Activated CD8-positive, alpha-beta memory T cell treated with anti-CD3 and anti-CD28 coated beads, Interleukin-2, amount 10 ng/mL, durations not matched to agents 7 days and 5 days (primary cell): ENCODE measurements at regions of chr9 and their contacts with region 1.

Region 1: DNA sequence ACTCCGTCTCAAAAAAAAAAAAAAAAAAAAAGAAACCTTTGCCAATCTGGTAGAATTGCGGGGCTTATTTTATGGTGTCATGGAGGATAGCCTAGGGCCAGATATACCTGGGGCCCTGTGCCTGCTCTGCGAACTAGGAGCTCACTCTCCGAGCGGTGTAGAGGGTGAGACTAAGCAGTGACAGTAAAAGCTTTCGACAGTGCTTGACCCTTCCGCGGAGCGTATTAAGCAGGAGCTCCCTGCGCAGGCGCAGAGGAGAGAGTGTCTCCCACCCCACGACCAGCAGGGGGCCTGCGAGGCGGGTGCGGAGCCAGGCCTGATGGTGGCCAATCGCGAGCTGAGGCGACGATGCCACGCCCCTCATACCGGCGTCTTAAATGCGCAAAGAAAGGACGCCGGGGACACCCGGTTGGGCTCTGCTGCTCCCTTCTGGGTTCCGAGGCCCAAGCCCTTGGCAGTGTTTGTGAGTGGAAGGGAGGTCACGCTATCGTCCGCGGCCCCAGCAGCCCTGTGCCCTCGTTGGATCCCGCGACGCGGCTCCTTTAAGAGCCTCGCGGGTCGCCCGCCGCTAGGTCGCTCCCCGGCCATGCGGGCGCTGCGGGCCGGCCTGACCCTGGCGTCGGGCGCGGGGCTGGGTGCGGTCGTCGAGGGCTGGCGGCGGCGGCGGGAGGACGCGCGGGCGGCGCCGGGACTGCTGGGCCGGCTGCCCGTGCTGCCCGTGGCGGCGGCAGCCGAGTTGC is at the start of gene ENDOG:
- DNase-seq: peak; percentile 99
- ATAC-seq: peak; percentile 95
- H3K4me3 Mint-ChIP-seq: peak within 1 kb of the TSS; percentile 82
- H3K27ac Mint-ChIP-seq: peak within 1 kb of the TSS; percentile 87
- H3K4me1 Mint-ChIP-seq: peaks cover 19% of the 10 kb centered on the region
- H3K27me3 Mint-ChIP-seq: no peaks in the 10 kb centered on the region
- total RNA-seq, gene ENDOG: 19.0 to 22.3 TPM

Region 2: GRCh38 chr9:128643519-128644300 is 174.6 kb before region 1 on chr9:
- CTCF ChIA-PET with region 1: interaction called, 14 read pairs
- DNase-seq: no peak
- ATAC-seq: no peak
- H3K4me3 Mint-ChIP-seq: no peak overlapping the region
- H3K27ac Mint-ChIP-seq: peak overlapping the region; percentile 21
- H3K4me1 Mint-ChIP-seq: peaks cover 5% of the 10 kb centered on the region
- H3K27me3 Mint-ChIP-seq: no peaks in the 10 kb centered on the region

Region 3: DNA sequence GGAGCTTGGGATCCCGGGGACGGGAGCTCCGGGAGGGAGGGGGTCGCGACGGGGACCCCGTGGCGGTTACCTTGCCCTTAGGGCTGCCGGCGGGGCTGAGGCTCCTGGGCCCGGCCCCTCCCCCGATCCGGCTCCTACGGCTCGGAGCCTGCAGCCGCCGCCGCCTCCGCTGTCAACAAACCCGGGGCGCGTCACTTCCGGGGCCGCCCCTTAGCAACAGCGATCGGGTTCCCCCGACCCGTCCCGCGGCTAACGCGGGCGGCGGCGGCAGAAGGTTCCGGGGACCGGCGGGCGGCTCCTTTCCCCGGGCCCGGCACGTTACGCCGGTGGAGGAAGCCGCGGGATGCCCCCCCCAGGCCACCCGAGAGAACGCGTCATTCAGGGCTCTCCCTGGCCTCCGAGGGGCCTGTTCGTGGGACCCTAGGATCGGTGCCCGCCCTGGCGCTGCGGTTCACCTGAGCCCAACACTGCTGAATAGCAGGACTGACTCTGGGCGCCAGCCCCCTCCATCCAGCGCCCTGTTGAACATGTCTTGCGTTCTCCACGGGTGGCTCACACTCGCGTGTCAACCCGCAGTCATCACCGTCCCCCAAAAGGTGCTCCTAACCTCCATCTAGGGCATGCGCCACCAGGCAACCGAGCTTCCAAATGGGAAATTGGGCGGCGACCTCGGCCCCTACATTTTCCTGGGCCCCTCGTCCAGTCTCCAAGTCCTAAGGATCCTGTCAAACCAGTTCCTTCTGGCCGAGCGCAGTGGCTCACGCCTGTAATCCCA is 46.3 kb before region 1 on chr9 and contains the start of gene ZER1:
- CTCF ChIA-PET with region 1: interaction called, 10 read pairs
- DNase-seq: peak; percentile 94
- ATAC-seq: peak; percentile 95
- H3K4me3 Mint-ChIP-seq: peak within 1 kb of the TSS; percentile 95
- H3K27ac Mint-ChIP-seq: peak within 1 kb of the TSS; percentile 96
- H3K4me1 Mint-ChIP-seq: peaks cover 19% of the 10 kb centered on the region
- H3K27me3 Mint-ChIP-seq: no peaks in the 10 kb centered on the region
- total RNA-seq, gene ZER1: 17.7 to 18.2 TPM

Region 4: DNA sequence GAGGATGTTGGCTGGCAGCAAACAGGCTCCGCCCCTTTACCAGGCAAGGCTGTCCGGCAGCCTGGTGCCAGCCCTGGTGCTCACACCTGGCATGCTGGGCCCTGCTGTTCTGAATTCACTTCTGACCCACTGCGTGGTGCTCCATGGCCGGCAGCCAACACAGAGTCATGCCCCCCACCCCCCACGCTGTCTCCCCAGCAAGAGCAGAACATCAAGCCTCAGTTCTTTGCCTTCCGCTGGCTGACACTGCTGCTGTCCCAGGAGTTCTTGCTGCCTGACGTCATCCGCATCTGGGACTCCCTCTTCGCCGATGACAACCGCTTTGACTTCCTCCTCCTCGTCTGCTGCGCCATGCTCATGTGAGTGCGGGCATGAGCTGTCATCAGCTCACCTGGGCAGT is 12.6 kb before region 1 on chr9:
- CTCF ChIA-PET with region 1: interaction called, 14 read pairs
- DNase-seq: no peak
- ATAC-seq: no peak
- H3K4me3 Mint-ChIP-seq: no peak overlapping the region
- H3K27ac Mint-ChIP-seq: no peak overlapping the region
- H3K4me1 Mint-ChIP-seq: no peaks in the 10 kb centered on the region
- H3K27me3 Mint-ChIP-seq: no peaks in the 10 kb centered on the region

Region 5: DNA sequence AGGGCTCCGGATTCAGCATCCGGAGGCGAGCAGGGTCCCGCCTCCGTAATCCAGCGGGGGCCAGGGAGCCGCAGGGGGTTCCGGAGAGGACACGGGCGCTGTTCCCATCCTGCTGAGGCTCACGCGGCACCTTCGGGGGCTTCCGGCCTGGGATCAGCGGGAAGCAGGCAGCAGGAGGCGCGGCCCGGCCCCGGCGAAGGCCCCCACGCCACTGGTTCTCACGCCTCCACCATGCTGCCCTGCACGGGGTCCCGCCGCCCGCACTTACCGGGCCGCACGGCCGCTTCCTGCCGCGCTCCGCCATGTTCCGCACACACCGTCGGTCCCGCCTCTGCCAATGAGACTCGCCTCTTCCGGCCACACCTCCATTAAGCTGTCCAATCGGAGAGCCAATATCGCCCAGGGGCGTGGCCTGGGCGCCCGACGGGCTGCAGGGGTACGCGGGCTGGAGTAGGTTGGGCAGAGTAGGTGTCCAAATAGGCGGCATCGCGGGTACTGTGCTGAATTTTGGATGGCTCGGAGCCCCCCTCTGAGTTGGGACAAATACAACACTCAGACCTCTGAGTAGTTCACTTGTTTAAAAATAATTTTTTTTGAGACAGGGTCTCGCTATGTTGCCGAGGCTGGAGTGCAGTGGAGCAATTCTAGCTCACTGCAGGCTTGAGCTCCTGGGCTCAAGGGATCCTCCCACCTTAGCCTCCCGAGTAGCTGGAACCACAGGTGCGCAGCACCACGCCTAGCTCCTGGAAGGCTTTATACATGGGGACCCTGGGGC is 11.4 kb after region 1 on chr9 and contains the start of gene SPOUT1:
- CTCF ChIA-PET with region 1: interaction called, 31 read pairs
- DNase-seq: peak; percentile 96
- ATAC-seq: peak; percentile 98
- H3K4me3 Mint-ChIP-seq: peak within 1 kb of the TSS; percentile 97
- H3K27ac Mint-ChIP-seq: peak within 1 kb of the TSS; percentile 90
- H3K4me1 Mint-ChIP-seq: peaks cover 23% of the 10 kb centered on the region
- H3K27me3 Mint-ChIP-seq: no peaks in the 10 kb centered on the region
- total RNA-seq, gene SPOUT1: 83.3 to 104 TPM

Region 6: DNA sequence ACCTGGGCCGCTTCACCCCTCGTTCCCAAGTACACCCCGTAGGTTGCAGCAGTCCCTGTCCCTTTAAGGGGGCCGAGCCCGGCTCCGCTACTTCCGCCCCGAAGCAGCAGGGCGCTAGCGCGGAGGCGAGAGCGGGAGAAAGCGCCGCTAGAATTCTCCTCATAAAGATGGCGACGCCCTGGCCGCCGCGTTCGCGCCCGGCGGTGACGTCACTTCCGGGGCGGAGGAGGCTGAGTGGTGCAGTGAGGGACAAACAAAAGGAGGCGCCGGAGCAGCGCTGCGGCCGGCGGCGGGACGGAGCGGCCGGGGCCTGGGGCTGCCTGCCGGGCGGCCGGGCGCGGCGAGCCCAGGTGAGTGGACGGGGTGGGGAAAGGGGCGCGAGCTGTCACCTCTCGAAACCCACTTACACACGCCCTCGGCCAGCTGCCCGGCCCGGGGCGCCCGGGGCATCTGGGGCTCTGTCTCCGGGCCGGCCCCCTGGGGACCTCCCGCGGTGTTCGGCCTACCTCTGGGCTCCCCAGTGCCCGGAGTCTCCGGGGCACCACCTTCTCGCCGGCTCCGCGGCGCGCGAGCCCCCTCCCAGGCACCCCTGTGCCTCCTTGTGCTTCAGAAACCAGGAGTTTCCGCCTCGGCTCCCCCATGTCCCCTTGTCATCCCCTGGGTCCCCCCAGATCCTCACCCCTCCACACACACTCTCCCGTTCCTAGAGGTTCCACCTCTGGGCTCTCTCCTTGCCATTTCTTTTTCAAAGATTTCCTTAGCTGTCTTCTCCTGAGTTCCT is 63.8 kb after region 1 on chr9 and contains the starts of genes KYAT1 and LRRC8A:
- CTCF ChIA-PET with region 1: interaction called, 16 read pairs
- DNase-seq: peak; percentile 99
- ATAC-seq: peak; percentile 96
- H3K4me3 Mint-ChIP-seq: peak within 1 kb of the TSS; percentile 90
- H3K27ac Mint-ChIP-seq: peak within 1 kb of the TSS; percentile 89
- H3K4me1 Mint-ChIP-seq: peaks cover 48% of the 10 kb centered on the region
- H3K27me3 Mint-ChIP-seq: no peaks in the 10 kb centered on the region
- total RNA-seq, gene KYAT1: 12.7 to 20.6 TPM
- total RNA-seq, gene LRRC8A: 25.6 to 26.7 TPM

Region 7: GRCh38 chr9:128927731-128928411 is 109.6 kb after region 1 on chr9:
- CTCF ChIA-PET with region 1: interaction called, 12 read pairs
- DNase-seq: peak; percentile 61
- ATAC-seq: peak; percentile 77
- H3K4me3 Mint-ChIP-seq: no peak overlapping the region
- H3K27ac Mint-ChIP-seq: no peak overlapping the region
- H3K4me1 Mint-ChIP-seq: peaks cover 12% of the 10 kb centered on the region
- H3K27me3 Mint-ChIP-seq: no peaks in the 10 kb centered on the region

Region 8: DNA sequence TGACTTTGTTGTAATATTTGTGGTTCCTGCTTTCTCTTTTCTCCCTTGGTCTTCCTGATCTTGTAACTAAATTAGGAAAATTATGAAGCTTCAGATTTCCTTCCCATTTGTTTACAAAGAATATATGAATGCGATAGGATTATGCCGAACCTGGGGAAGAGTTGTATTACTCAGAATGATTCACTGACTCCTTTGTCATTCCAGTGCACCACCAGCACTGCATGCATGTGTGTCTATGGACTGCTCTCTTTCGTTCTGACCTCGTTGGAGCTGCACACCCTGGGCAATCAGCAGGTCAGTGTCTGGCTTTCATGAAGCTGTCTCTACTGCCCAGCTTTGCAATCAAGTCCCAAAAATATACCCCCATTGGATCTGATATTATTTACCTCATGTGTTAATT is 154.7 kb after region 1 on chr9:
- CTCF ChIA-PET with region 1: no interaction called
- DNase-seq: no peak
- ATAC-seq: no peak
- H3K4me3 Mint-ChIP-seq: no peak overlapping the region
- H3K27ac Mint-ChIP-seq: no peak overlapping the region
- H3K4me1 Mint-ChIP-seq: no peaks in the 10 kb centered on the region
- H3K27me3 Mint-ChIP-seq: no peaks in the 10 kb centered on the region